ENCODE measurements at regions of chr1 and their contacts with region 1.

Region 1: GRCh38 chr1:225923692-225924555 is at the start of gene PYCR2:
- DNase-seq: peak; percentile 95
- H3K4me3 Mint-ChIP-seq: peak within 1 kb of the TSS; percentile 94
- H3K27ac Mint-ChIP-seq: peak within 1 kb of the TSS; percentile 91
- H3K4me1 Mint-ChIP-seq: peaks cover 43% of the 10 kb centered on the region
- H3K27me3 Mint-ChIP-seq: no peaks in the 10 kb centered on the region
- total RNA-seq, gene PYCR2: 137 and 145 TPM in 2 replicates

Region 2: GRCh38 chr1:225428068-225428880 is 495.6 kb before region 1 on chr1:
- intact Hi-C with region 1: loop called (anchors 2 kb)
- DNase-seq: peak; percentile 94
- H3K4me3 Mint-ChIP-seq: peak overlapping the region; percentile 83
- H3K27ac Mint-ChIP-seq: peak overlapping the region; percentile 90
- H3K4me1 Mint-ChIP-seq: peaks cover 56% of the 10 kb centered on the region
- H3K27me3 Mint-ChIP-seq: no peaks in the 10 kb centered on the region

Region 3: DNA sequence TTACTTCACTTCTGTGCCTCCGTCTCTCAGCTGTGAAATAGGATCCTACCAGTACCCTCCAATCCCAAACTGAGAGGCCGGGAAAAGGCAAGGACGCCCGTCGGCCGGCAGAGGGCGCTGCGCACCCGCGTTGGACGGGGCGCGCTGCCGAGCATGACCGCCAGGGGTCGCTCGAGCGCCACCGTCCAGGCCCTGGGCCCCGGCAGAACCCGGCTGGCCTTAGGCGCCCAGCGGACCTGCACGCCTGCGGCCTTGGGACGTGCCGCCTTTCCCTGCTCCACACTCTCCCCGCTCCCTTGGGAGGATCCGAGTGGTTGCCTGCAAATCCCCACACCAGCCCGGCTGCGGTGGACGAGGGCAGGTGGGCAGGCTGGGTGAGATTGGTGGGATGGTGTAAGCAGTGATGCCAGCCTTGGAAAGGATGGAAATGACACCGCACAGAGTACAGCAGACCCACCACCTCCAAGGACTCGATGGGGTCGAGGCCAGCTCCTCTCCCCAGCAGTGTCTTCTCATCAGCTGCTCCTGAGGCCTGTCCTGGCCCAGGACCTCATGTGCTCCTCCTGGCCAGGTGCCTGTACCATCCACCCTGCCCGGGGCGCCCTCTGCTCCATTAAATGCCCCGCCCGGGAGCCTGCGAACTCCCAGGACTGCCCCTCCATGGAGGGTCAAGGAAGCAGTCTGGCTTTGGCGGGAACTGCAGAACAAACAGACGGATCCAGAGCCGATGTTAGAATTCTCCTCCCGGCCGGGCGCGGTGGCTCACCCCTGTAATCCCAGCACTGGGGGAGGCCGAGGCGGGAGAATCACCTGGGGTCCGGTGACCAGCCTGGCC is 448.7 kb before region 1 on chr1:
- intact Hi-C with region 1: loop called (anchors 2 kb)
- DNase-seq: peak; percentile 69
- H3K4me3 Mint-ChIP-seq: no peak overlapping the region
- H3K27ac Mint-ChIP-seq: no peak overlapping the region
- H3K4me1 Mint-ChIP-seq: peaks cover 41% of the 10 kb centered on the region
- H3K27me3 Mint-ChIP-seq: peaks cover 2% of the 10 kb centered on the region

Region 4: GRCh38 chr1:225767634-225768540 is 156.0 kb before region 1 on chr1:
- intact Hi-C with region 1: no loop called
- DNase-seq: no peak
- H3K4me3 Mint-ChIP-seq: no peak overlapping the region
- H3K27ac Mint-ChIP-seq: no peak overlapping the region
- H3K4me1 Mint-ChIP-seq: no peaks in the 10 kb centered on the region
- H3K27me3 Mint-ChIP-seq: peaks cover 5% of the 10 kb centered on the region

Region 5: GRCh38 chr1:225881969-225882693 is 41.8 kb before region 1 on chr1 and contains the start of gene TMEM63A:
- intact Hi-C with region 1: loop called (anchors 1 kb)
- DNase-seq: peak; percentile 82
- H3K4me3 Mint-ChIP-seq: peak within 1 kb of the TSS; percentile 86
- H3K27ac Mint-ChIP-seq: peak within 1 kb of the TSS; percentile 77
- H3K4me1 Mint-ChIP-seq: peaks cover 52% of the 10 kb centered on the region
- H3K27me3 Mint-ChIP-seq: peaks cover 19% of the 10 kb centered on the region
- total RNA-seq, gene TMEM63A: 20.4 and 23.4 TPM in 2 replicates

Region 6: DNA sequence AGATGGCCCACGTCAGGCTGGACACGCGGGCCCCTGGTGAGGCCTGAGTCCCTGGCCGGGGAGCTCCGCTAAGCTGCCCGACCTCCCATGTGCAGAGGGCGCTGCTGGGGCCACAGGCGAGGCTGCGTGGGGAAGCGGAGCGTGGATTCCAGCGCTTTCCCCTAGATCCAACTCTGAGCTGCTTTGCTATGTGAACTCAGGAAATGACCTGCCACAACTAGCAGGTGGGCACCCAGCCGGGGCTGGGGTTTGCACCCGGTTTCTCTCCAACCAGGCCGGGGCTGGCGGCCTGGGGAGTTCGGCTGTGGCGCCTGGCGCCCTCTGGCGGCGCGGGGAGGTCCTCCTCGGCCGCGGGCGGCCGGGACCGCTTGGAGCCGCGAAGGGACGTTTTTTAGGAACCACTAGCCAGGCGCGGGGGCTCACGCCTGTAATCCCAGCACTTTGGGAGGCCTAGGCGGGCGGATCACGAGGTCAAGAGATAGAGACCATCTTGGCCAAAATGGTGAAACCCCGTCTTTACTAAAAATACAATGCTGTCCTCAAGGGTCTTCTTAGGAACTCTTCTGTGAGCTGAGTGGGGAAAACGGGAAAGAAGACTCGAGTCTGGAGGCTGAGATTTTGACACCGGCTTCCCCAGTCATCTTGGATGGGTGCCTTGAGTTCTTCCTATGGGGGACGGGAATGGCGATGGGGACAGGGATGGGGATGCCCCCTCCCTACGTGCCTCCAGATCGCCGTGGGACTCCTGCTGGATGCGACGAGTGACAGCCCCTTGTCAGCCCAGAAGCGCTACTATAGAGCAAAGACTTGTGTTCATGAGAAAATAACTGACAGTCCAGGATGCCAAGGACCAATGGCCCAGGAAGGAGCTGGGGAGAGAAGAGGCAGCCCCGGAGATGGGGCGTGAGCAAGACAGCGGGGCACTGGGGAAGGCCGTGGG is 12.5 kb before region 1 on chr1:
- intact Hi-C with region 1: loop called (anchors 1 kb)
- DNase-seq: peak; percentile 59
- H3K4me3 Mint-ChIP-seq: no peak overlapping the region
- H3K27ac Mint-ChIP-seq: no peak overlapping the region
- H3K4me1 Mint-ChIP-seq: peaks cover 16% of the 10 kb centered on the region
- H3K27me3 Mint-ChIP-seq: peaks cover 2% of the 10 kb centered on the region

Region 7: DNA sequence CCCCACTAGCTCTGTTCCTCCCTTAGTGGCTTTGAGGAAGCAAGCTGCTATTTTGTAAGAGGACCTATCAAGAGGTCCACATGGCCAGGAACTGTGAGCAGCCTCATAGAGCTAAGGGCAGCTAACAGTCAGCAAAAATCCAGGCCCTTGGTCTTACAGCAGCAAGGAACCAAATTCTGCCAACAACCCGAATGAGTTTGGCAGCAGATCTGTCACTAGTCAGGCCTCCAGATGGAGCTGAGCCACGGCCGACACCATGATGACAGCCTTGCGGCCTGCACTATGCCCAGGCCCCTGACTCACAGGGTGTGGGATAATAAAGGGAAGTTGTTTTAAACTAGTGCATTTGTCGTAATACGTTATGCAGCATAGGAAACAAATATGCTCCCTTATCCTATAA is 110.6 kb after region 1 on chr1:
- intact Hi-C with region 1: no loop called
- DNase-seq: no peak
- H3K4me3 Mint-ChIP-seq: no peak overlapping the region
- H3K27ac Mint-ChIP-seq: no peak overlapping the region
- H3K4me1 Mint-ChIP-seq: no peaks in the 10 kb centered on the region
- H3K27me3 Mint-ChIP-seq: peaks cover 1% of the 10 kb centered on the region

Measured in activated T-helper 1 cell treated with anti-CD3 and anti-CD28 coated beads, Interleukin-12 subunit alpha, Interleukin-12 subunit beta, Interleukin-2, Interleukin-4 antibody, amounts not matched to agents 30 ng/mL and 10 ng/mL and 1 ng/mL, durations not matched to agents 14 hours and 24 hours and 36 hours (primary cell).